Activated CD8-positive, alpha-beta T cell treated with anti-CD3 and anti-CD28 coated beads, Interleukin-2, amount 10 ng/mL, durations not matched to agents 7 days and 5 days (primary cell): ENCODE measurements at regions of chr1 and their contacts with region 1.

Region 1: DNA sequence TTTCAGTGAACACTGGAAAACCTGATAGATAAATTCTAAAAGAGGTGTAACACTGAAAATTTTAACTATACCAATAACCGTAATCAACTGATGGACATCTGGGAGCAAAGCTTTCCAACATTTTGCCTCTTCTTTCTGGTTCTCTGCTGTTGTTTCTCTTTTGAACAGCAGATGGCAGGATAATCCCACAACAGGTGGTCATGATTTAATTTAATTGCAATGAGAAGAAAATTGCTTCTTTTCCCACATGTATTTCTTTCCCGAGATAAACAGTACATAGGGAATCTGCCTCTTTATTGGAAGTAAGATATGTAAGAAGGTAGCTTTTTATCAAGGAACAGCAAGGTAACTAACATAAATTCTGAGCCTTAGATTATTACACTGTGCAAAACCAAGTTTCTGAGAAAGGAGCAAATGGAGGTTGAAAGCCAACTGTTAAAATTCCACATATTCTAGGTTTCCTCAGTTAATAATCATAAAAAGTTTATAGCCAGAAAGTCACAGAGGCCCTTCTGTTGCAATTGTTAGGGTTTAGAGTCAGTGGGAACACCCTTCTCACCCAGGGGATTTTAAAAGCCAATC is 72.9 kb downstream of the RPS6KA1 start:
- DNase-seq: peak; percentile 64
- ATAC-seq: peak; percentile 42
- H3K4me3 Mint-ChIP-seq: no peak overlapping the region
- H3K27ac Mint-ChIP-seq: no peak overlapping the region
- H3K4me1 Mint-ChIP-seq: peaks cover 23% of the 10 kb centered on the region
- H3K27me3 Mint-ChIP-seq: peaks cover 17% of the 10 kb centered on the region

Region 2: DNA sequence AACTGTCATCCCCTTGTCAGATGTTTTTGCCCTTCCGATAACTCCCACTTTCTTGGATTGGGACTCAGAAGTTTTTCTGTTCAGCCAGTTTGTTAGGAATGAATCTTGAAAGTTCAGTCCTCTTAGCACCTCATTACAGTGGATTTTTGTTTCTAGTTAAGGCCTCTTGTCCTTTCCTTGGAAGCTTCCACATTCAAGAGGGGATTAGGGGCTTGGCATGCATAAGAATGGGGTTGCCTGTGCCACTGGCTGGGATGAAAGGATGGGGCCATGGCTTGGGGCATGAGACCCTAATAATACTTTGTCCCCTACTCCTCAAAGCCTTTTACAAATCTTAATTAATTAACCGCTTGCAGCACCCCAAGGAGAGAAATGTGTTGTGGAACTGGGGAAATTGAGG is 172.7 kb before region 1 on chr1:
- CTCF ChIA-PET with region 1: no interaction called
- POLR2A ChIA-PET with region 1: no interaction called
- DNase-seq: no peak
- ATAC-seq: no peak
- H3K4me3 Mint-ChIP-seq: no peak overlapping the region
- H3K27ac Mint-ChIP-seq: no peak overlapping the region
- H3K4me1 Mint-ChIP-seq: peaks cover 26% of the 10 kb centered on the region
- H3K27me3 Mint-ChIP-seq: no peaks in the 10 kb centered on the region

Region 3: GRCh38 chr1:26541816-26542711 is 60.4 kb before region 1 on chr1:
- CTCF ChIA-PET with region 1: interaction called, 10 read pairs
- POLR2A ChIA-PET with region 1: interaction called, 3 read pairs
- DNase-seq: peak; percentile 92
- ATAC-seq: peak; percentile 74
- H3K4me3 Mint-ChIP-seq: peak overlapping the region; percentile 85
- H3K27ac Mint-ChIP-seq: peak overlapping the region; percentile 99
- H3K4me1 Mint-ChIP-seq: peaks cover 93% of the 10 kb centered on the region
- H3K27me3 Mint-ChIP-seq: no peaks in the 10 kb centered on the region

Region 4: GRCh38 chr1:26677306-26678115 is 75.0 kb after region 1 on chr1:
- CTCF ChIA-PET with region 1: interaction called, 26 read pairs
- POLR2A ChIA-PET with region 1: no interaction called
- DNase-seq: peak; percentile 66
- ATAC-seq: peak; percentile 96
- H3K4me3 Mint-ChIP-seq: no peak overlapping the region
- H3K27ac Mint-ChIP-seq: peak overlapping the region; percentile 47
- H3K4me1 Mint-ChIP-seq: peaks cover 21% of the 10 kb centered on the region
- H3K27me3 Mint-ChIP-seq: peaks cover 2% of the 10 kb centered on the region

Region 5: DNA sequence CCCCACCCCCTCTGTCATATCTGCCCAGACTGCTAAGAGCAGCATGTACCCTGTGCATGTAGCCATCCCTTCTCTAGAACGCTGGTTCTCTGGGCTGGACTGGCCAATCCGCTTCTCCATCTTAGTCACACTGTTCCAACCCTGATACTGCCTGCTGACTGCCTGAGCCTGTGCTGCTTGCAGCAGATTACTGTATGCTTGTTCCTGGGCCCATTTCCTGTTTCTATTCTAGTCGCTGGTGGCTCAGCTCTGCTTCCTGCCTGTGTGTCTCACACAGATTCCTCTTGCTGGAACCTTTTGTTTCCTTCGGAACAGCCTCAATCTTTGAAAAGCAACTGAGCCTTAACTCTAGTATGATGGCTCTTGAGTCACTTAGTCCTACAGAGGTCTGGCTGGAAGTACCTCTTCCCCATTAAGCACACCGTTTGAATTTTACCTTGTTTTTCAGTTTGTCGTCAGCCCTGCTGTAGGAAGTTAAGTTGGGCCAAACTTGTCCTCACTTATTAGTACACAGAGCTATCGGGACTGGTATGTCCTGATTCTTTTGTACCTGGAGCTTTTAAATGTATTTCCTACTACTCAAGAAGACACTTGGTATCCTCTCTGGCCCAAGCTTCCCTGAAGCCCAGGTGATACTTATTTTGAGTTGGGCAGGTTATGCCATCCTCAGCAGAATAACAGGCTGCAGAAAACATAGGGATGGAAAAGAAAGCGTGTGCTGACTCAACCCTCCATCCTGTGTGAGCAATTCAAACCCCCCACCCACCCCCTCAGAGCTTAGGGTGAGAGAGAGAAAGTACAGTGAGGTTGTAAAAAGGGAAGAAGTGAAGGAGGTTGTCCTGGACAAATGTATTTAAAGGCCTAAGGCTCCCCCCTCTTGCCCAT is 141.8 kb after region 1 on chr1:
- CTCF ChIA-PET with region 1: interaction called, 44 read pairs
- POLR2A ChIA-PET with region 1: no interaction called
- DNase-seq: peak; percentile 94
- ATAC-seq: peak; percentile 98
- H3K4me3 Mint-ChIP-seq: peak overlapping the region; percentile 71
- H3K27ac Mint-ChIP-seq: peak overlapping the region; percentile 97
- H3K4me1 Mint-ChIP-seq: peaks cover 83% of the 10 kb centered on the region
- H3K27me3 Mint-ChIP-seq: no peaks in the 10 kb centered on the region

Region 6: GRCh38 chr1:26820784-26821269 is 218.4 kb after region 1 on chr1:
- CTCF ChIA-PET with region 1: interaction called, 11 read pairs
- POLR2A ChIA-PET with region 1: no interaction called
- DNase-seq: peak; percentile 64
- ATAC-seq: peak; percentile 93
- H3K4me3 Mint-ChIP-seq: peak overlapping the region; percentile 70
- H3K27ac Mint-ChIP-seq: peak overlapping the region; percentile 80
- H3K4me1 Mint-ChIP-seq: peaks cover 25% of the 10 kb centered on the region
- H3K27me3 Mint-ChIP-seq: no peaks in the 10 kb centered on the region

Region 7: DNA sequence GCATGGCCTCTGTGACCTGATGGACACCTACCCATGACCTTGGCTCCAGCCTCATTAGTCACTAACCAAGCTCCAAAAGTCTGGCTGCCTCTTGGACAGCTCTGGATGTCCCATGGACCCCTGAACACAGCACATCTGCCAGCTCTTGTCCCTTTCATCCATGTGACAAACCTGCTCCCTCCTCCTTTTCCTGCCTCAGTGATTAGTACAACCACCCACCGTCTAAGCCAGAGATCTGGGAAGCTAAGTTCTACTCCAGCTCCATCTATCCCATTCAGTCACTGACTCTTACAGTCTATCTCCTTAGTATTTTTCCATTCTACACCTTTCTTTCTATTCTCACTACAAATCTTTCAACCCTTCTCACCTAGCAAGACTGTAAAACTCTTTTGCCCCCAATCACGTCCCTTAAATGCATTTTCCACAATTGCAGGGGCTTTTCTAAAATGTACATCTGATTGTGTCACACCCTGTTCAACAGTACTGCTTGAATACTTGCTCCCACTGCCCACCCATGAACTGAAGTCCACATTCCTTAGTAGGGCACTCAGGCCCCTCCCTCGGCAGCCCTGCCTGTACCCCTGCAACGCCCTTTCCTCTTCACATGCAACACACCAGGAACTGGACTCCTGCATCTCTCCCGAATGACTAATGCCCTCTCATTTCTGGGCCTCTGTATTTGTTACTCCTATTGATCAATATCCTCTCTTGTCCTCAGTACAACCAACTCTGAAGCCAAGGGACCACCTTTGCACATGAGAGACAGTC is 280.4 kb after region 1 on chr1:
- CTCF ChIA-PET with region 1: interaction called, 21 read pairs
- POLR2A ChIA-PET with region 1: interaction called, 3 read pairs
- DNase-seq: no peak
- ATAC-seq: no peak
- H3K4me3 Mint-ChIP-seq: no peak overlapping the region
- H3K27ac Mint-ChIP-seq: no peak overlapping the region
- H3K4me1 Mint-ChIP-seq: peaks cover 6% of the 10 kb centered on the region
- H3K27me3 Mint-ChIP-seq: no peaks in the 10 kb centered on the region